T-cell (primary cell): ENCODE measurements at regions of chr14 and their contacts with region 1.

Region 1: DNA sequence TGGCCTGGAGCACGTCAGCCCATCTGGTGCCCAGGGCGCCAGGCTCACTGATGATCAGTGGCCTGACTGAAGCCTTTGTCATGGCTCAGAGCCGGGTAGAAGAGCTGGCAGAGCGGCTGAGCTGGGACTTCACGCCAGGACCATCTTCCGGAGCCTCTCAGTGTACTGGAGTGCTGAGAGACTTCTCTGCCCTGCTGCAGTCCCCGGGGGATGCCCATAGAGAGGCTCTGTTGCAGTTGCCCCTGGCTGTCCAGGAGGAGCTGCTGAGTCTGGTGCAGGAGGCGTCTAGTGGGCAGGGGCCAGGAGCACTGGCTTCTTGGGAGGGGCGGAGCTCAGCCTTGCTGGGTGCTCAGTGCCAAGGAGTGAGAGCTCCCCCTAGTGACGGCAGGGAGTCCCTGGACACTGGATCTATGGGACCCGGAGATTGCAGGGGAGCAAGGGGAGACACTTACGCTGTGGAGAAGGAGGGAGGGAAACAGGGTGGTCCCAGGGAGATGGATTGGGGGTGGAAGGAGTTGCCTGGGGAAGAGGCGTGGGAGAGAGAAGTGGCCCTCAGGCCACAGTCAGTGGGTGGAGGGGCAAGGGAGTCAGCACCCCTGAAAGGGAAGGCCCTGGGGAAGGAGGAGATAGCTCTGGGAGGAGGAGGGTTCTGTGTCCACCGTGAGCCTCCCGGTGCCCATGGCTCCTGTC is 2.0 kb downstream of the KHNYN start:
- DNase-seq: peak; percentile 69 to 95 (median 83)
- ATAC-seq: peak; percentile 43 to 59 (median 48)
- H3K4me3 ChIP-seq: peak overlapping the region in 1 of 2 donors; percentile 86
- H3K4me3 Mint-ChIP-seq: peak overlapping the region; percentile 82 to 93 (median 88)
- H3K27ac ChIP-seq: peak overlapping the region; percentile 98
- H3K27ac Mint-ChIP-seq: peak overlapping the region; percentile 95 to 96
- H3K4me1 ChIP-seq: peaks cover 26 to 60% of the 10 kb centered on the region in 2 experiments
- H3K4me1 Mint-ChIP-seq: peaks cover 44 to 70% (median 57%) of the 10 kb centered on the region in 3 donors
- H3K27me3 ChIP-seq: no peaks in the 10 kb centered on the region
- H3K27me3 Mint-ChIP-seq: no peaks in the 10 kb centered on the region

Region 2: DNA sequence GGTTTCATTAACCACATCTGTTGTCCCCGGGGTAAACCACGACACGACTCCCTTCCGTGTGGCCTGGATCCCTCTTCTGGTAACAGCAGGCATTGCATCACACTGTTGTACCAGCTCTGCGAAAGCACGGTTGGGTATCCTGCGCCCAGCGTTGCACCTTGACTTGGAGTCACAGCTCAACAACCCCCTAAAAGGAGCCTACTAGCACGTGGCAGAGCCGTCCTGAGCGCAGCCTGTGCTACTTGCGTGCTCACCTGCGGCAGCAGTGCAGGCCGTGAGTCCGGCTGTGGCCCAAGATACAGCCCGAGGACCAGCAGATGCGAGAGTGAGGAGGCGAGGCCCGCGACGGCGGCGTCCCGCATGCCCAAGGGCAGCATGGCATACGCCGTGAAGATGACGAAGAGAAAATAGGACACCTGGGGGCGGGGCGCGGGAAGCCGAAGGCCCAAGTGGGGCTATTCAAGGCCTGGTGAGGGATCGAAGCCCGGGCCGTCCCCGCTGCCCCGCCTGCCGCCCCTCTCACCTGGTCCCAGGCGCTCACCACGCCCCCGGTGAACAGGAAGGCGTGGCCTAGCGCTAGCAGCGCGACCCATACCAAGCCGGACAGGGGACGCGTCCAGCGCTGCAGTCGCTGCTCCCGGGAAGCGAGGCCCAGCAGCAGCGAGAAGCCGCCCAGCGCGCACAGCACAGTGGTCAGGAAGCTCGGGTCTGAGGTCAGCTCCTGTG is 99.3 kb before region 1 on chr14:
- CTCF ChIA-PET with region 1: interaction called, 36 to 66 read pairs
- POLR2A ChIA-PET with region 1: interaction called, 3 read pairs
- DNase-seq: peak; percentile 69 to 95 (median 86)
- ATAC-seq: peak; percentile 81 to 88 (median 87)
- H3K4me3 ChIP-seq: peak overlapping the region; percentile 35 to 38
- H3K4me3 Mint-ChIP-seq: peak overlapping the region; percentile 77 to 84 (median 78)
- H3K27ac ChIP-seq: no peak overlapping the region
- H3K27ac Mint-ChIP-seq: peak overlapping the region; percentile 54 to 75
- H3K4me1 ChIP-seq: peaks cover 17 to 79% of the 10 kb centered on the region in 2 experiments
- H3K4me1 Mint-ChIP-seq: peaks cover 53 to 81% (median 56%) of the 10 kb centered on the region in 3 donors
- H3K27me3 ChIP-seq: peaks cover 8 to 46% of the 10 kb centered on the region in 2 experiments
- H3K27me3 Mint-ChIP-seq: peaks cover 18 to 29% of the 10 kb centered on the region in 2 donors

Region 3: GRCh38 chr14:24442273-24443052 is 10.7 kb after region 1 on chr14 and contains the start of gene SDR39U1:
- CTCF ChIA-PET with region 1: interaction called, 19 to 22 read pairs
- POLR2A ChIA-PET with region 1: interaction called, 8 to 11 read pairs
- DNase-seq: peak; percentile 87 to 100 (median 97)
- ATAC-seq: peak; percentile 87 to 90 (median 88)
- H3K4me3 ChIP-seq: peak within 1 kb of the TSS; percentile 60 to 84
- H3K4me3 Mint-ChIP-seq: peak within 1 kb of the TSS; percentile 96 to 100 (median 97)
- H3K27ac ChIP-seq: peak within 1 kb of the TSS; percentile 95
- H3K27ac Mint-ChIP-seq: peak within 1 kb of the TSS; percentile 99
- H3K4me1 ChIP-seq: peaks cover 13 to 27% of the 10 kb centered on the region in 2 experiments
- H3K4me1 Mint-ChIP-seq: peaks cover 44 to 51% (median 50%) of the 10 kb centered on the region in 3 donors
- H3K27me3 ChIP-seq: no peaks in the 10 kb centered on the region
- H3K27me3 Mint-ChIP-seq: no peaks in the 10 kb centered on the region
- total RNA-seq, gene SDR39U1: 79.6 to 154 (median 109) TPM